PC-3 (cell line): ENCODE measurements at regions of chr9 and their contacts with region 1.

Region 1: GRCh38 chr9:113657703-113658544 is 194.4 kb downstream of the RGS3 start:
- DNase-seq: peak; percentile 88
- ATAC-seq: peak; percentile 97
- H3K4me3 ChIP-seq: no peak overlapping the region
- H3K27ac ChIP-seq: no peak overlapping the region
- H3K4me1 ChIP-seq: peaks cover 4% of the 10 kb centered on the region; the same call in 1 of the 2 replicates
- H3K27me3 ChIP-seq: no peaks in the 10 kb centered on the region
- CTCF ChIP-seq: peak; percentile 82

Region 2: GRCh38 chr9:112921549-112921948 is 736.4 kb before region 1 on chr9:
- CTCF ChIA-PET with region 1: no interaction called
- POLR2A ChIA-PET with region 1: no interaction called
- intact Hi-C with region 1: loop called (anchors 10 kb)
- DNase-seq: peak; percentile 53
- ATAC-seq: 0 out of 2 replicates have a peak, but pooled peaks have one; percentile 40
- H3K4me3 ChIP-seq: no peak overlapping the region
- H3K27ac ChIP-seq: no peak overlapping the region
- H3K4me1 ChIP-seq: peaks cover 21% of the 10 kb centered on the region
- H3K27me3 ChIP-seq: no peaks in the 10 kb centered on the region
- CTCF ChIP-seq: peak; percentile 64

Region 3: GRCh38 chr9:113309204-113309813 is 348.6 kb before region 1 on chr9:
- CTCF ChIA-PET with region 1: no interaction called
- POLR2A ChIA-PET with region 1: no interaction called
- intact Hi-C with region 1: loop called (anchors 10 kb)
- DNase-seq: peak; percentile 55
- ATAC-seq: peak; percentile 64
- H3K4me3 ChIP-seq: no peak overlapping the region
- H3K27ac ChIP-seq: no peak overlapping the region
- H3K4me1 ChIP-seq: no peaks in the 10 kb centered on the region
- H3K27me3 ChIP-seq: no peaks in the 10 kb centered on the region
- CTCF ChIP-seq: peak; percentile 77

Region 4: GRCh38 chr9:113446323-113446740 is 211.6 kb before region 1 on chr9:
- CTCF ChIA-PET with region 1: interaction called, 11 read pairs
- POLR2A ChIA-PET with region 1: no interaction called
- intact Hi-C with region 1: loop called (anchors 2 kb)
- DNase-seq: peak; percentile 67
- ATAC-seq: no peak
- H3K4me3 ChIP-seq: no peak overlapping the region
- H3K27ac ChIP-seq: no peak overlapping the region
- H3K4me1 ChIP-seq: no peaks in the 10 kb centered on the region
- H3K27me3 ChIP-seq: no peaks in the 10 kb centered on the region
- CTCF ChIP-seq: peak; percentile 70

Region 5: GRCh38 chr9:113591001-113591898 is 66.7 kb before region 1 on chr9:
- CTCF ChIA-PET with region 1: interaction called, 67 read pairs
- POLR2A ChIA-PET with region 1: interaction called, 4 read pairs
- intact Hi-C with region 1: loop called (anchors 1 kb)
- DNase-seq: peak; percentile 66
- ATAC-seq: peak; percentile 66
- H3K4me3 ChIP-seq: no peak overlapping the region
- H3K27ac ChIP-seq: no peak overlapping the region
- H3K4me1 ChIP-seq: no peaks in the 10 kb centered on the region
- H3K27me3 ChIP-seq: no peaks in the 10 kb centered on the region
- CTCF ChIP-seq: peak; percentile 83

Region 6: GRCh38 chr9:113624721-113625120 is 33.2 kb before region 1 on chr9:
- CTCF ChIA-PET with region 1: no interaction called
- POLR2A ChIA-PET with region 1: no interaction called
- intact Hi-C with region 1: no loop called
- DNase-seq: peak; percentile 35
- ATAC-seq: no peak
- H3K4me3 ChIP-seq: no peak overlapping the region
- H3K27ac ChIP-seq: no peak overlapping the region
- H3K4me1 ChIP-seq: peaks cover 29% of the 10 kb centered on the region
- H3K27me3 ChIP-seq: no peaks in the 10 kb centered on the region
- CTCF ChIP-seq: no peak

Region 7: DNA sequence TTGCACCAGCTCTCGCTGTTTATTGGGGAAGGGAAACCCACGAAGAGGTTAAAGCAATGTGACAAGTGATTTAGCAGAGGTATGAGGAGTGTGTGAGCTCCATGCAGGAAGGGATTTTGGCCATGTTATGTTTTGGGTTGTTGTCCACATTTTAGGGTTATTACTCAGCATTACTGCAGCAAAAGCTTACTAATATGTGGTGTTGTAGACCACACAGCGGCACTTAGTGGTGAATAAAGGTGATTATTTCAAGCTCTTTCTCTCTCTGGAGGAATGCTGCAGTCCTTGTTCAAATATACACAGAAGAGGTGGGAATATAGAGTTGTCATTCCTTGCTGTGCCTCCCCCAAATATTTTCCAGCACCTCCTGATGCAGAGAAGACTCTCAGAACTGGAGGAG is 759.6 kb after region 1 on chr9:
- CTCF ChIA-PET with region 1: no interaction called
- POLR2A ChIA-PET with region 1: no interaction called
- intact Hi-C with region 1: no loop called
- DNase-seq: peak; percentile 38
- ATAC-seq: peak; percentile 70
- H3K4me3 ChIP-seq: no peak overlapping the region
- H3K27ac ChIP-seq: no peak overlapping the region
- H3K4me1 ChIP-seq: peaks cover 3% of the 10 kb centered on the region; the same call in 1 of the 2 replicates
- H3K27me3 ChIP-seq: no peaks in the 10 kb centered on the region
- CTCF ChIP-seq: peak; percentile 40; the same call in 1 of the 2 replicates